ENCODE measurements at regions of chr7 and their contacts with region 1.

Region 1: DNA sequence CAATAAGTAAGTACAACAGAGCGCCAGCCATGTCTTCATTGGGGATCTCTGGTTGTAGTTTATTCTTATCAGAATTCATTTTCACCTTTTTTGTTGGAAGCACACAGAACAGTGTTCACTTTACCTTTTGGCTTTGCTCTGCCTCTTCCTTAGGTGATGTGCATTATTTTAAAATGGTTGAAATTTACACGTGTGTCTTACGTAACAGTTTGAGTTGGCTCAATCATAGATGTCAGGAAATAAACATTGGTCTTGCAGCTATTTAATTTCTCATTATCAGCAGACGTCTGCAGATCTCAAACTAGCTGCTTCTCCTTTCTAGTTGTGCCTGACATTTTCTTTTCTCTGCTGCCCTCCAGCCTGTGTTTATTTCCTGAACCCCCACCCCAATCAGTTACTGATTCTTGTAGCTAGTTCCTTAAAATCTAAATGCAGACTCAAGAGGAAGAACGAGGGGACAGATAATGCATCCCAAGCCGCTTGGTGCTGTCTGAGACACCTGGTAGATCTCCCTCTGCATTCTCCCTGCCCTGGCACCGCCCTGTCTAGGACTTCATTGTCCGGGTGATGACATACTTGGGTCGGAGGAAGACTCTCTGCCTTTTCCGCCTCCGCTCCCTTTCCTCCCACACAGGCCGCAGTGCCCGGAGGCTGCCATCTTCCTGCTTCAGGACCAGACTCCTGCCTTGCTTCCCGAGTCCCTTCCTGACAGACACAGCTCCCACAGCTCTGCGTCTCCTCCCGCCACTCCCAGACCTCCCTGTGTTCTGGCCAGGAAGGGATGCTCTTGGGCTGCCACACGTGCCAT is 108.2 kb downstream of the ANKRD61 start:
- DNase-seq: no peak
- H3K4me3 ChIP-seq: no peak overlapping the region
- H3K27ac ChIP-seq: no peak overlapping the region
- H3K27me3 ChIP-seq: no peaks in the 10 kb centered on the region
- CTCF ChIP-seq: no peak

Region 2: DNA sequence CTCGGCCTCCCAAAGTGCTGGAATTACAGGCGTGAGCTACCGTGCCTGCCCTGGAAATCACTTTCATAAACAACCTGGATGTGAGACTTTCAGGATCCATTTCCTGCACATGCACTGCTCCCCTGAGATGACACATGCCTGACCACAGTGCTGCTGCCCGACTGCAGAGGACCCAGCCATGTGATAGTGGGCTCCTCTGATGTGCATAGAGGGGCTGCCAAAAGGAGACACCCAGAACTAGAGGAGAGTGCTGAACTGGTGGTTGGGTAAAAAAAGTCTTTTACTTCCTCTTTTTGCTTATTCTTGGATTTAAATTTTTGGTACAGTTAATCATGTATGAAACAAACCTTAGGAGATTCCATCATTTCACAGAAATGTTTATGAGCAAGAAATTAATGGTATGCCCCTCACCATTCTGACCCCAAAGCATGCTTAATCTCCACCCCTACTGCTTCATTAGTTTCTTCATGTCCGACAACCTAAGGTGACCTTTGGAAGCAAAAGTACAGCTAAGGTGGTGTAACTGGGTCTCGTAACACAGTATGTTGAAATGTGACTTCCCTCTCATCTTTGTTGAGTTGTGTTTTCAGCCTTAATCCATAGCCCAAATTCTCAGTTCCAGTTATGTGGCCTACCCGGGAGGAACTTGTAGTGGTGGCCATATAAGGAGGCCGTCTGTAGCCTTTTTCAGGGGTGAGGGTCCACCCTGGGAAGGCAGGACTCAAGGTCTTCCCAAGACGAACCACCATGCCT is 469.0 kb before region 1 on chr7:
- in situ Hi-C with region 1: no loop called
- DNase-seq: no peak
- H3K4me3 ChIP-seq: no peak overlapping the region
- H3K27ac ChIP-seq: no peak overlapping the region
- H3K27me3 ChIP-seq: no peaks in the 10 kb centered on the region
- CTCF ChIP-seq: no peak

Region 3: DNA sequence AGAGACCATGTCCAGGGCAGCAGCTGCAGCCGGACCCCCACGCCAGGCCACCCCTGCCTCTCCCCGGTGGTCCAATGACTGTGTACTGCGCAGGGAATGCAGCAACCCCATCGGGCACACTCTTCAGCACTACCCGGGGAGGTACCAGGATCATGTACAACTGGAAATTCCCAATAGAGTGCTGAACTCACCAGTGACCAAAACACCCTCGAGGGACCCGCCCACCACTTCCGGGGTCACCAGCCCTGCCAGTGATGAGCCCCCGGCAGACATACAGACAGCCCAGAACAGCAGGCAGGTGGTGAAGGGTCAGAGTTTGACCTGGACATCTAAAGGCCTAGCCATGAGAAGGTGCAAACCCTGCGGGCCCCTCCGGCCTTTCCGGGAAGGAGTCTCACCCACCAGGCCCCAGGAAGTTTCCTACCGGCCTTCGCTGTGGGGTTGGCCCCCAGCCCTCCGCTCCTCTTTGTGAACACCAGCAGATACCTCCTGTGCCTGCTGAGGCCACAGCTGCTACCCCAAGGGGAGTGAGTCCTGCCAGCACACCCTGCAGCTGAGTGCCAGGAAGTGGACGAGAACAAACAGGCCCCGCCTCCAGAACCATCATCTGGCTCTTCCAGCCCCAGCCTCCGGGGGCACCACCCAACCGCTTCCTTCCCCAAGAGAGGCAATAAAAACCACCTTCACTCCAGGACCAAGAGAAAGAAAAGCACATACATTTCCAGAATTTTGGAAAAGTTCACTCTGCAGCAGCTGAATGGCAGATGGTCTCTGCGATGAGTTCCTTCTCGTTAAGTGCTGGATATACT is 113.2 kb before region 1 on chr7:
- in situ Hi-C with region 1: loop called (anchors 25 kb)
- DNase-seq: peak; percentile 27
- H3K4me3 ChIP-seq: no peak overlapping the region
- H3K27ac ChIP-seq: no peak overlapping the region
- H3K27me3 ChIP-seq: no peaks in the 10 kb centered on the region
- CTCF ChIP-seq: peak; percentile 56